GM12878 (cell line): ENCODE measurements at regions of chr7 and their contacts with region 1.

Region 1: GRCh38 chr7:3065724-3066143 is 22.1 kb upstream of the CARD11 start:
- DNase-seq: no peak
- ATAC-seq: peak; percentile 62
- H3K4me3 ChIP-seq: peak overlapping the region; percentile 13; the same call in 1 of the 2 replicates
- H3K27ac ChIP-seq: no peak overlapping the region
- H3K4me1 ChIP-seq: peaks cover 47% of the 10 kb centered on the region
- H3K27me3 ChIP-seq: no peaks in the 10 kb centered on the region
- CTCF ChIP-seq: peak; percentile 59 to 90 (median 78)
- EP300 ChIP-seq: no peak
- POLR2A ChIP-seq: no peak
- RAD21 ChIP-seq: peak; percentile 70

Region 2: DNA sequence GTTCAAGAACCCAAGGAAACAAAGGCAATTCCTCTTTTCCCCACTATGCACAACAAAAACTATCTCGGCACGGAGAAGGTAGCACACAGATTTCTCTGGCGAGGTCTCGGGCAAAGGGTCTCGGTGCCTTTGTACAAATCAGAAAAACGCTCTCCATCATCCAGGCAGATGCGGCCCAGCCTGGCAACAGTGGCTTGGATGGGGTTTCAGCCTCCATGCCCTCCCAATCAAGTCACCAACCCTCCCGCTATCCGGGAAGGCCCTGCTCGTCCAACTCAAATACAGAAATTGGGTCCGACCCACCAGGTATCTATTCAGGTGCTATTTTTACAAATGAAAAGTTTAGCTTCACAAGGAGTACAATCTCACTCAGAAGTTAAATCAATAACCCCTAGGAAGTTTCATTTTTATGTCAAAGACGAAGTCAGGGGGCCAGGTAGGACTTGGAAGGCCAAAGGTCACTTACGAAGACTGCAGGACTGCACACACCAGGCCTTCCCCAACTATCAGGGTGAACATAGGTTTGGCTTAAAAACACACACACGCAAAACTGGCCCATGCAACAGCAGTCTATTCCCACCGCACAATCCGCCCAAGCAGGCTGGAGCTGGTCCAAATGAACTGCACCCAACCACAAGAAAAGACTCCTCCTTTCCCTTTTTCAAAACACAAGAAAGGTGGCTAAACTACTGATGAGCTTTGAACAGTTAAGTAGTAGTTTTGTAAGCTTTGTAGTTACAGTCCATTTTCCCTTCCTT is 264.6 kb before region 1 on chr7:
- CTCF ChIA-PET with region 1: no interaction called
- POLR2A ChIA-PET with region 1: no interaction called
- RAD21 ChIA-PET with region 1: no interaction called
- SMC1A ChIA-PET with region 1: no interaction called
- in situ Hi-C with region 1: no loop called
- intact Hi-C with region 1: no loop called
- DNase-seq: no peak
- ATAC-seq: peak; percentile 45
- H3K4me3 ChIP-seq: no peak overlapping the region
- H3K27ac ChIP-seq: no peak overlapping the region
- H3K4me1 ChIP-seq: peaks cover 8% of the 10 kb centered on the region; the same call in 1 of the 2 replicates
- H3K27me3 ChIP-seq: no peaks in the 10 kb centered on the region
- CTCF ChIP-seq: no peak
- EP300 ChIP-seq: no peak
- POLR2A ChIP-seq: no peak
- RAD21 ChIP-seq: no peak

Region 3: GRCh38 chr7:2894118-2894940 is 171.4 kb before region 1 on chr7:
- CTCF ChIA-PET with region 1: interaction called, 19 read pairs
- POLR2A ChIA-PET with region 1: interaction called, 6 read pairs
- RAD21 ChIA-PET with region 1: interaction called, 27 read pairs
- SMC1A ChIA-PET with region 1: interaction called, 58 read pairs
- in situ Hi-C with region 1: no loop called
- intact Hi-C with region 1: no loop called
- DNase-seq: peak; percentile 51
- ATAC-seq: peak; percentile 86
- H3K4me3 ChIP-seq: peak overlapping the region; percentile 51
- H3K27ac ChIP-seq: peak overlapping the region; percentile 84
- H3K4me1 ChIP-seq: peaks cover 23% of the 10 kb centered on the region
- H3K27me3 ChIP-seq: no peaks in the 10 kb centered on the region
- CTCF ChIP-seq: no peak
- EP300 ChIP-seq: peak; percentile 37 to 73; a peak in 1 of 4 replicates
- POLR2A ChIP-seq: peak; percentile 54
- RAD21 ChIP-seq: no peak

Region 4: GRCh38 chr7:3042861-3043489 is 22.8 kb before region 1 on chr7:
- CTCF ChIA-PET with region 1: interaction called, 61 read pairs
- POLR2A ChIA-PET with region 1: interaction called, 7 read pairs
- RAD21 ChIA-PET with region 1: interaction called, 32 read pairs
- SMC1A ChIA-PET with region 1: interaction called, 18 read pairs
- in situ Hi-C with region 1: no loop called
- intact Hi-C with region 1: no loop called
- DNase-seq: no peak
- ATAC-seq: peak; percentile 80
- H3K4me3 ChIP-seq: peak overlapping the region; percentile 100
- H3K27ac ChIP-seq: peak overlapping the region; percentile 69
- H3K4me1 ChIP-seq: peaks cover 28% of the 10 kb centered on the region
- H3K27me3 ChIP-seq: no peaks in the 10 kb centered on the region
- CTCF ChIP-seq: no peak
- EP300 ChIP-seq: 0 out of 4 replicates have a peak, but pooled peaks of 1 of the 2 experiments have one; percentile 17
- POLR2A ChIP-seq: no peak
- RAD21 ChIP-seq: 0 out of 2 replicates have a peak, but pooled peaks have one; percentile 8

Region 5: DNA sequence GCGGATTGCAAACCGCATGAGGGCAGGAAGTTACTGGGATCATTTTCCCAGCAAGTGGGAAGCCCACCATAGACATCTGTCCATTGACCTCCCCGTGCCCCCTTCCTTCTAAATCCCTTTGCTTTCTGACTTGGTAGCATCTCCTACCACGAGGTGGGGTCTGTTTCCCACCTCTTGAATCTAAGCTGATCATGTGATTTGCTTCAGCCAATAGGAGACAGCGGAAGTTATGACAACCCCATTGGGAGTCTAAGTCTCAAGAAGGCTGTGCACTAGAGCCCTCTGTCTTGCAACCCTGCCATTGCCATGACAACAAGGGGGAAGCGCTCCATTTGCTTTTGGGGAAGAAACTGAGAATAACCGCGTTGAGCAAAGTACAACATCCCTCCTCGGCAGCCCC is 17.1 kb after region 1 on chr7:
- CTCF ChIA-PET with region 1: interaction called, 9 read pairs
- POLR2A ChIA-PET with region 1: interaction called, 5 read pairs
- RAD21 ChIA-PET with region 1: interaction called, 8 read pairs
- SMC1A ChIA-PET with region 1: interaction called, 17 read pairs
- in situ Hi-C with region 1: no loop called
- intact Hi-C with region 1: no loop called
- DNase-seq: no peak
- ATAC-seq: no peak
- H3K4me3 ChIP-seq: no peak overlapping the region
- H3K27ac ChIP-seq: no peak overlapping the region
- H3K4me1 ChIP-seq: peaks cover 4% of the 10 kb centered on the region; the same call in 1 of the 2 replicates
- H3K27me3 ChIP-seq: no peaks in the 10 kb centered on the region
- CTCF ChIP-seq: no peak
- EP300 ChIP-seq: no peak
- POLR2A ChIP-seq: no peak
- RAD21 ChIP-seq: no peak

Region 6: DNA sequence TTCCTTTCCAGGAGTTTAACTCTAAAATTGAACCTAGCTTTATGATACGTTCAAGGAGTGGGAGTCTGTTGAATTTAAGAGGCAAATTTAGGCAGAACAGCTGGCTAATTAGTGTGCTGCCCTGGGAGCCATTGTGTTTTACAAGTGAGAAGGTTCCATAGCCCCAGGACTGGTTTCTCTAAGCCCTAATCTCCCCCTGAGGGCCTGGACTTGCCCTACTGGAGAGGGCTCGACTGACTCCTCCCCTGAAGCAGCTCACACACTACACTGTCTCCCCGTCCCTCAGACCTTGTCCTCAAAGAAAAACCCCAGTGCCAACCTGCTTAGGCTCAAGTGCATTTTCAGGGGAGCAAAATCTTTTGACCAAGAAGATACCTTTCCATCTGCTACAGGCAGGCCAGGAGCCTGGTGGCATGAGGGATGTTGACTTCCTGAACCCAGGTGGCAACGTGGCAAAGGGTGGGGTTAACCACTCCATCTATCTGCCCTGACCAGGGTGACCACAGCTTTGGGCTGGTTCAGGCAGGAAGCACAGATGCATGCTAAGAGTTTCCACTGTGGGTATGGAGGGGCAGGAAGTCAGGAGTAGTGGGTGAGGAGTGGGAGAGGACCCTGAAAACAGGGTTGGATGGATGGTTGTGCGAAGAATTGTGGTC is 46.9 kb after region 1 on chr7:
- CTCF ChIA-PET with region 1: no interaction called
- POLR2A ChIA-PET with region 1: no interaction called
- RAD21 ChIA-PET with region 1: no interaction called
- SMC1A ChIA-PET with region 1: no interaction called
- in situ Hi-C with region 1: no loop called
- intact Hi-C with region 1: no loop called
- DNase-seq: no peak
- ATAC-seq: no peak
- H3K4me3 ChIP-seq: no peak overlapping the region
- H3K27ac ChIP-seq: no peak overlapping the region
- H3K4me1 ChIP-seq: no peaks in the 10 kb centered on the region
- H3K27me3 ChIP-seq: no peaks in the 10 kb centered on the region
- CTCF ChIP-seq: no peak
- EP300 ChIP-seq: no peak
- POLR2A ChIP-seq: no peak
- RAD21 ChIP-seq: no peak

Region 7: GRCh38 chr7:3143869-3144775 is 78.4 kb after region 1 on chr7:
- CTCF ChIA-PET with region 1: interaction called, 20 read pairs
- POLR2A ChIA-PET with region 1: no interaction called
- RAD21 ChIA-PET with region 1: interaction called, 10 read pairs
- SMC1A ChIA-PET with region 1: interaction called, 3 read pairs
- in situ Hi-C with region 1: no loop called
- intact Hi-C with region 1: no loop called
- DNase-seq: no peak
- ATAC-seq: no peak
- H3K4me3 ChIP-seq: no peak overlapping the region
- H3K27ac ChIP-seq: no peak overlapping the region
- H3K4me1 ChIP-seq: no peaks in the 10 kb centered on the region
- H3K27me3 ChIP-seq: no peaks in the 10 kb centered on the region
- CTCF ChIP-seq: no peak
- EP300 ChIP-seq: no peak
- POLR2A ChIP-seq: no peak
- RAD21 ChIP-seq: no peak